Mammary epithelial cell (primary cell): ENCODE measurements at regions of chr13 and their contacts with region 1.

Region 1: DNA sequence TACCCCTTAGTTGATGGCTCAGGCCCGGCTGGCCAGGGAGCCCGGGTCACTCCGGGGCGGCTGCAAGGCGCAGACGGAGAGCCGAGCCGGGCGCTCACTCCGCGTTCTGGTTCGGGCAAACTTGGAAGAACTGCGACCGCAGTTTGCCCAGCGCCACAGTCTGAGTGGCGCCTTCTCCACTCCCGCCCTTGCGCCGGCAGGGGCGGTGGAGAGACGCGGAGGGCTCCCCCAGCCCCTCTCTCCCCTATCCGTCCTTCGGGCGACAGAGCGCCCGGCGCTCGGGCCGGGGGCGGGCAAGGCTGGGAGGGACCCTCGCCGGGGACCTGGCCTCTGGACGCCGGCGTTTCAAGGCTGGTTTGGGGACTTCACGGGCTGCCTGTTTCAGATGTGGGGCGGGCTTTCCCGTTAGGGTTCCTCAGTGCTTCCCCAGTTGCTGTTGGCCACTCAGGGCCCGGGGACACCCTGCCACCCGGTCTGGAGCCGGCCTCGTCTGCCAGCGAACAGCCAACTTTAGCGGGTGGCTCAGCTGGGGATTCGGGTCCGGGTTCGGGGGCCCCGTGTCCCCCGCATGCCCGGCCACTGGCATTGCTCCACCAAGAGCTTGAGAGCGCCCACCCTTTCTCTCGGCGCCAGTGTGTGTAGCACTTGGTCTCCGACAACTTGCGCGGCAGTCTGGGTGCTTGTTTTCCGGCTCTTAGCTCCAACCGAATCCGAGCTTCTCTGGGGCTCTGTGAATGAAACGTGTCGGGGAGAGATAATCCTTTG is 1.5 kb downstream of the GPC6 start:
- DNase-seq: peak; percentile 90
- H3K4me3 ChIP-seq: peak overlapping the region; percentile 45 to 92 (median 84)
- H3K27ac ChIP-seq: peak overlapping the region; percentile 46
- H3K4me1 ChIP-seq: peaks cover 20% of the 10 kb centered on the region
- H3K27me3 ChIP-seq: no peaks in the 10 kb centered on the region
- CTCF ChIP-seq: peak; percentile 24 to 69

Region 2: DNA sequence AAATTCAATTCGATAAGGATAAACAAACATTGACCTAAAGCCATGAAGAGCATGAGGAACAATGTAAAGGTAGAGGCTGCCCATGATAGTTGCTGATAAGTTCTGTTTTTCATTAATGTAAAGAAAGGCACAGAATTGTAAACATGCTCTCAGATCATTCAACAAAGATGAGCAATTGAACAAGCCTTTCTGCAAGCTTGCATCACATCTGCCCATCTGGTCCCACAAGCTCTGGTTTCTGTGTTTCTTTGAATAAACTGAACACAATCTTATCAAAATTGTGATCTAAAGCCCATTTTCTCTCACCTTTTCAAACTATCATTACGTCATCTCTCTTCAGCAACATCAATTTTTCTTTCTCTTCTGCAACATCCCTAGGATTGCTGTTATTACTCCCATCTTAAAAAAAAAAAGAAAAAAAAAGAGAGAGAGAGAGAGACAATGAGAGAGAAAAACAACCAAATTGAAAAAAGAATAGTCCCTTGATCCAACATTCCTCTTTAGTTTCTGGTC is 488.7 kb before region 1 on chr13:
- CTCF ChIA-PET with region 1: no interaction called
- dilution Hi-C with region 1: no loop called
- in situ Hi-C with region 1: no loop called
- intact Hi-C with region 1: loop called (anchors 10 kb)
- DNase-seq: peak; percentile 7
- H3K4me3 ChIP-seq: no peak overlapping the region
- H3K27ac ChIP-seq: no peak overlapping the region
- H3K4me1 ChIP-seq: no peaks in the 10 kb centered on the region
- H3K27me3 ChIP-seq: no peaks in the 10 kb centered on the region
- CTCF ChIP-seq: no peak

Region 3: GRCh38 chr13:92994056-92994455 is 234.0 kb before region 1 on chr13:
- CTCF ChIA-PET with region 1: no interaction called
- dilution Hi-C with region 1: no loop called
- in situ Hi-C with region 1: no loop called
- intact Hi-C with region 1: loop called (anchors 5 kb)
- DNase-seq: peak; percentile 78
- H3K4me3 ChIP-seq: no peak overlapping the region
- H3K27ac ChIP-seq: no peak overlapping the region
- H3K4me1 ChIP-seq: peaks cover 19% of the 10 kb centered on the region
- H3K27me3 ChIP-seq: no peaks in the 10 kb centered on the region
- CTCF ChIP-seq: no peak

Region 4: GRCh38 chr13:93169980-93170379 is 58.1 kb before region 1 on chr13:
- CTCF ChIA-PET with region 1: no interaction called
- dilution Hi-C with region 1: no loop called
- in situ Hi-C with region 1: no loop called
- intact Hi-C with region 1: loop called (anchors 1 kb)
- DNase-seq: peak; percentile 100
- H3K4me3 ChIP-seq: no peak overlapping the region
- H3K27ac ChIP-seq: peak overlapping the region; percentile 77
- H3K4me1 ChIP-seq: peaks cover 17% of the 10 kb centered on the region
- H3K27me3 ChIP-seq: no peaks in the 10 kb centered on the region
- CTCF ChIP-seq: no peak

Region 5: DNA sequence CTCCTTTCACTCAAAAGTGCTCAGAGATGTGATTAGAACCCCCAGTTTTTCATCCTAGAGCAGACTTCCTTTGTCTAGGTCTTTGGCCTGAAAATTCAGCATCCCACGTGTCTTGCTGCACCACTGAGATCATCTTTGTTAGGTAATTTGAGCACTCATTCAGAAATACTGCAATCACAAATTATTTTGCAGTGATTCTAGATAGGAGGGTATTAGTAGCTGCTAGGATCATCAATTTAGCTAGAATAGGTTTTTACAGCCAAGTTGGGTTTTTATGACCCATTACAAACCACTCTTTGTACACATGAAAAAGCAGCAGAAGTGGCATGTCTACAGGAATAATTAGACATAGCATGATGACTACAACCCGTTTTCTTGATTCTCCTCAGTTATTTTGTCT is 218.2 kb after region 1 on chr13:
- CTCF ChIA-PET with region 1: no interaction called
- dilution Hi-C with region 1: no loop called
- in situ Hi-C with region 1: no loop called
- intact Hi-C with region 1: no loop called
- DNase-seq: no peak
- H3K4me3 ChIP-seq: no peak overlapping the region
- H3K27ac ChIP-seq: no peak overlapping the region
- H3K4me1 ChIP-seq: peaks cover 7% of the 10 kb centered on the region
- H3K27me3 ChIP-seq: no peaks in the 10 kb centered on the region
- CTCF ChIP-seq: no peak

Region 6: DNA sequence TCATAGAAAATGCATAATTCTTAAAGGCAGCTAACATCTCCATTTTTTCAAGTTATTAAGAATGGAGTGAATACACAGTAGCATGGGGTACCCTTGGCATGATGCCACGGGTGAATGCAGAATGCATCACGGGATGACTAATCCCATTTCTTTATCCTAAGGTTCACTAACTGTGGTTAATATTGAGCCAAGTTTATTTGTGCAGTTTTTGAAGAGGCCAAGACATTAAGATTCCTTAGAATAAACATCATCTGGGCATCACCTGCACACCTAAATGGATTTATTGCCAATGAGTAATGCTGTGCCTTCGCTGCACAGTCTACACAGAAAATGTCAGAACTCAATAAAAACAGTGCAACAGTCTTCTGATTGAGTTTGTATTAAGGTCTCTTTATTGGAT is 331.7 kb after region 1 on chr13:
- CTCF ChIA-PET with region 1: no interaction called
- dilution Hi-C with region 1: no loop called
- in situ Hi-C with region 1: loop called in 1 of 2 experiments (anchors 10 kb)
- intact Hi-C with region 1: loop called (anchors 5 kb)
- DNase-seq: peak; percentile 92
- H3K4me3 ChIP-seq: no peak overlapping the region
- H3K27ac ChIP-seq: no peak overlapping the region
- H3K4me1 ChIP-seq: peaks cover 20% of the 10 kb centered on the region
- H3K27me3 ChIP-seq: no peaks in the 10 kb centered on the region
- CTCF ChIP-seq: no peak

Region 7: GRCh38 chr13:93859716-93860115 is 631.7 kb after region 1 on chr13:
- CTCF ChIA-PET with region 1: no interaction called
- dilution Hi-C with region 1: no loop called
- in situ Hi-C with region 1: no loop called
- intact Hi-C with region 1: loop called (anchors 10 kb)
- DNase-seq: no peak
- H3K4me3 ChIP-seq: no peak overlapping the region
- H3K27ac ChIP-seq: no peak overlapping the region
- H3K4me1 ChIP-seq: no peaks in the 10 kb centered on the region
- H3K27me3 ChIP-seq: no peaks in the 10 kb centered on the region
- CTCF ChIP-seq: no peak

Region 8: GRCh38 chr13:94345374-94346195 is 1117.5 kb after region 1 on chr13:
- CTCF ChIA-PET with region 1: no interaction called
- dilution Hi-C with region 1: no loop called
- in situ Hi-C with region 1: loop called in 1 of 2 experiments (anchors 25 kb)
- intact Hi-C with region 1: loop called (anchors 2 kb)
- DNase-seq: peak; percentile 77
- H3K4me3 ChIP-seq: no peak overlapping the region
- H3K27ac ChIP-seq: no peak overlapping the region
- H3K4me1 ChIP-seq: no peaks in the 10 kb centered on the region
- H3K27me3 ChIP-seq: no peaks in the 10 kb centered on the region
- CTCF ChIP-seq: peak; percentile 46 to 61